ENCODE measurements at regions of chr12 and their contacts with region 1.

Region 1: GRCh38 chr12:52582971-52583456 is 9.4 kb upstream of the KRT74 start:
- DNase-seq: peak; percentile 72
- H3K4me3 ChIP-seq: no peak overlapping the region
- H3K27ac ChIP-seq: no peak overlapping the region
- H3K4me1 ChIP-seq: no peaks in the 10 kb centered on the region
- H3K27me3 ChIP-seq: no peaks in the 10 kb centered on the region
- CTCF ChIP-seq: peak; percentile 41 to 92 (median 78)
- POLR2A ChIP-seq: no peak

Region 2: DNA sequence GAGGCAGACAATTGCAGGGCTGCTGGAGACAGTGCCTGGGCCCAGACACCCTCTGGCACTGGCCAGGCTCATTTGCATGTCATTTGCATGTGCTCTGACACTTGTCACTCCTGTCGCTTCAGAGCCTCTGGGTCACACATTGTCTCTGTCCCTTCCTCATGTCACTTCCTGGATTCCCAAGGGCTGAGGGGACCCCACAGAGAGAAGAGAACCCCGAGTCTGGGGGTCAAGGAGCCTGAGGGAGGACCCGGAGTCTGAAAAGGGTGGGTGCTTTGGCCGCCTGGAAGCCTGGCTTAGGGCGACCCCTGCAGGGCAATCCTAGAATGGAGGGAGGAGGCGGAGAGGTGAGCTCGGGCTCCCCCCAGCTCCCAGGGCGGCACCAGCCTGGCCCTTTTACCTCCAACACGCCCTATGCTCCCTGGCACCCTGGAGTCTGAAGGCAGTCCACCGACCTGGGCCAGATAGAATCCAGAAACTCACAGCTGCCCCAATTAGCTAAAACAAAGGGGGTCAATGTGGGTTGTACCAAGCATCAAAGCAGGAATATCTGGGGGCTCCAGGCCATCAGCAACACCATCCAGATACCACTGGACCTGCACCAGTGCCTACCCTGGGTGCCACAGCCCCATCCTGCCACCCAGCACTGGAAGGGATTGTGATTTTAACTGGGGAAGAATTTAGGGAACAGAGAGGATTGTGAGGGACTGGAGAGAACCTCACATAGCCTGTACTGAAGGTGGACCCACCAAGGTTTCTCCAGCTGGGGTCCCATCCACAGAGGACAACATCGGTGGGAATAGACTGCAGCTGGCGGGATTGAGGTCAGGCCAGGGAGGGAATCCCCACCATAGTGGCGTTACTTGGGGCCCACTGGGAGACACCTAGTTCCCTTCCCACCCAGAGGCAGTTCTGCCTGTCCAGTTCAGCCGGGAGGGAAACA is 287.6 kb after region 1 on chr12:
- intact Hi-C with region 1: loop called (anchors 2 kb)
- DNase-seq: peak; percentile 46
- H3K4me3 ChIP-seq: no peak overlapping the region
- H3K27ac ChIP-seq: peak overlapping the region; percentile 42 to 43
- H3K4me1 ChIP-seq: no peaks in the 10 kb centered on the region
- H3K27me3 ChIP-seq: no peaks in the 10 kb centered on the region
- CTCF ChIP-seq: peak; percentile 30 to 87 (median 64)
- POLR2A ChIP-seq: peak; percentile 9

Region 3: GRCh38 chr12:52969828-52970569 is 387.0 kb after region 1 on chr12:
- intact Hi-C with region 1: loop called (anchors 10 kb)
- DNase-seq: peak; percentile 91
- H3K4me3 ChIP-seq: no peak overlapping the region
- H3K27ac ChIP-seq: peak overlapping the region; percentile 45 to 55
- H3K4me1 ChIP-seq: no peaks in the 10 kb centered on the region
- H3K27me3 ChIP-seq: no peaks in the 10 kb centered on the region
- CTCF ChIP-seq: no peak
- POLR2A ChIP-seq: no peak

Measured in prostate gland (tissue), 2 donors.